Activated naive CD8-positive, alpha-beta T cell treated with anti-CD3 and anti-CD28 coated beads, Interleukin-2, amount 10 ng/mL, durations not matched to agents 7 days and 5 days (primary cell): ENCODE measurements at regions of chr1 and their contacts with region 1.

Region 1: DNA sequence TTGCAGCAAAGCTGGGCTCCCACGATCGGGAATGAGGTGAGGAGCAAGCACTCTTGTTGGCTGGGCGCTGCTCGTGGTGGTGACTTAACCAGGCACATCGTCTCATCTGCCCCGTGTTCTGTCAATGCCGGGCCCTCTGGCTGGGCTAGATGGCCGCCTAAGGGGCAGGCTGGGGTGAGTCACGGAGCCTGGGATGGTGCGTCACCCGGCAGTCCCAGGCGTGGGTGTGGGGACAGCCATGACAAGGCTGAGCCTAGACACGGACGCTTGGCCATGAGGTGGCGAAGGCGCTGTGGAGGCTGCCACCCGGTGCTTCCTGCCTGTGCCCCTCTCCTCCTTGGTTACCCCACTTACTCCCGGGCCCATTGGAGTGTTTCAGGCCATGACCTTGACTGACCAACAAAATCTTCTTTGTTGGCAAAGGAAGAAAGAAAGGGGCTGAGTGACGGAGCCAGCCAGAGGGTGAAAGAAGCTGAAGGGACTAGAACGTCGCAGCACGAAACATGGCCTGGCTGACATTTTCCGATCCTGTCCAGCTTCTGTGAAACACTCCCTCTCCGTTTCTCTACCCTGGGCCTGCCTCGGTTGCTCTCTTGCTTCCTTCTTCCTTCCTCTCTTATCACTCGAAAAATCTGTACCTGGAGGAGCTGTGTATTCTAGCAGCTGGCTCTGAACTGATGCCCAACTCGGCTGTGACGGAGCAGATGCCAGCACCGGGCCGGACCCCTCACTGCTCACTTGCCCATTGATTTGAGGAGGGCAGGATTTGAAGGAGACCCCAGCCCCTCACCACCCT is 596 bp downstream of the CD247 start:
- DNase-seq: peak; percentile 78
- ATAC-seq: peak; percentile 80
- H3K4me3 Mint-ChIP-seq: peak overlapping the region; percentile 96
- H3K27ac Mint-ChIP-seq: peak overlapping the region; percentile 98
- H3K4me1 Mint-ChIP-seq: peaks cover 28% of the 10 kb centered on the region
- H3K27me3 Mint-ChIP-seq: no peaks in the 10 kb centered on the region

Region 2: GRCh38 chr1:167439301-167439988 is 78.3 kb before region 1 on chr1:
- POLR2A ChIA-PET with region 1: interaction called, 21 read pairs
- DNase-seq: peak; percentile 60
- ATAC-seq: peak; percentile 17
- H3K4me3 Mint-ChIP-seq: peak overlapping the region; percentile 72
- H3K27ac Mint-ChIP-seq: peak overlapping the region; percentile 88
- H3K4me1 Mint-ChIP-seq: peaks cover 72% of the 10 kb centered on the region
- H3K27me3 Mint-ChIP-seq: no peaks in the 10 kb centered on the region

Region 3: GRCh38 chr1:167454894-167455785 is 62.6 kb before region 1 on chr1:
- POLR2A ChIA-PET with region 1: interaction called, 63 read pairs
- DNase-seq: peak; percentile 84
- ATAC-seq: peak; percentile 67
- H3K4me3 Mint-ChIP-seq: peak overlapping the region; percentile 78
- H3K27ac Mint-ChIP-seq: peak overlapping the region; percentile 80
- H3K4me1 Mint-ChIP-seq: peaks cover 47% of the 10 kb centered on the region
- H3K27me3 Mint-ChIP-seq: no peaks in the 10 kb centered on the region

Region 4: DNA sequence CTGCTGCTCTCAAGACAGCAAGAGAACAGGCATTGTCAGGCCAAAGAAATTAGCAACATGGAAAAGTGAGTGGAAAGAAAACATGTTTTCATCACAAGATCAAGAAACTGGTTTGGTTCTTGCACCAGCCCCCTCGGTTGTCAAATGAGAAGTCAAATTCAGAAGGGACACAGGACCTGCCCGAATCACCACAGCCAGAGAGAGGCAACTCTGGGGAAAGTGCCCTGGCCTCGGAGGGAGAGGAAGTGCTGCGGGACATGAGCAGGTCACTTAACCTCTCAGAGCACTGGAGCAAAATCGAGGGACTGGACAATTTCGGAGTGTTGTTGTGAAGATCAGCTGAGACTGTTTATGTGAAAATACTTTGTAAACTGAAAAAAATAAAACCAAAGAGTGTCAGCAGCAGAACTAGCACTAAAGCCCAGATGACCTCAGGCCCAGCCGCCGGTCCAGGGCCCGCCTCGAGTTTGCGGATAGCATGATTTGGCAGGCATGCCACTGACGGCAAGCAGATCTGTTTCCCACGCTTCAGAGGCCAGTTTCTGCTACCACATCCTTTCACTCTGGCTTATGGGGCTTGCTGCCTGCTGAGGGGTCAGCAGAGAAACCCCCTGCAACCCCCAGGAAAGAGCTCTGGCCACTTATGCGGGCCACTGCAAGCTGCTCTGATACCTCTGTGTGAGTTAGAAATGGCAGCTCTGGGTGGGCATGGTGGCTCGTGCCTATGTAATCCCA is 31.5 kb before region 1 on chr1:
- POLR2A ChIA-PET with region 1: interaction called, 10 read pairs
- DNase-seq: no peak
- ATAC-seq: no peak
- H3K4me3 Mint-ChIP-seq: peak overlapping the region; percentile 79
- H3K27ac Mint-ChIP-seq: peak overlapping the region; percentile 90
- H3K4me1 Mint-ChIP-seq: peaks cover 86% of the 10 kb centered on the region
- H3K27me3 Mint-ChIP-seq: no peaks in the 10 kb centered on the region

Region 5: GRCh38 chr1:167499664-167500101 is 18.1 kb before region 1 on chr1:
- POLR2A ChIA-PET with region 1: interaction called, 66 read pairs
- DNase-seq: no peak
- ATAC-seq: peak; percentile 64
- H3K4me3 Mint-ChIP-seq: peak overlapping the region; percentile 75
- H3K27ac Mint-ChIP-seq: peak overlapping the region; percentile 88
- H3K4me1 Mint-ChIP-seq: peaks cover 86% of the 10 kb centered on the region
- H3K27me3 Mint-ChIP-seq: no peaks in the 10 kb centered on the region